CD4-positive, alpha-beta memory T cell (primary cell): ENCODE measurements at regions of chr15 and their contacts with region 1.

Region 1: GRCh38 chr15:84633311-84634227 is 20.5 kb downstream of the WDR73 start:
- DNase-seq: peak; percentile 62 to 68 (median 67)
- H3K4me3 ChIP-seq: peak overlapping the region; percentile 63 to 91
- H3K4me3 Mint-ChIP-seq: peak overlapping the region; percentile 91 to 97 (median 95)
- H3K27ac ChIP-seq: peak overlapping the region; percentile 75
- H3K27ac Mint-ChIP-seq: peak overlapping the region; percentile 91 to 97 (median 96)
- H3K4me1 ChIP-seq: peaks cover 40% of the 10 kb centered on the region
- H3K4me1 Mint-ChIP-seq: peaks cover 28 to 56% (median 44%) of the 10 kb centered on the region in 4 donors
- H3K27me3 ChIP-seq: no peaks in the 10 kb centered on the region
- H3K27me3 Mint-ChIP-seq: no peaks in the 10 kb centered on the region

Region 2: GRCh38 chr15:84588053-84588874 is 45.3 kb before region 1 on chr15:
- CTCF ChIA-PET with region 1: interaction called, 18 read pairs
- POLR2A ChIA-PET with region 1: interaction called, 6 read pairs
- intact Hi-C with region 1: loop called (anchors 1 kb)
- DNase-seq: peak; percentile 80 to 81 (median 80)
- H3K4me3 ChIP-seq: no peak overlapping the region
- H3K4me3 Mint-ChIP-seq: peak overlapping the region in 7 of 8 donors; percentile 19 to 77 (median 38)
- H3K27ac ChIP-seq: no peak overlapping the region
- H3K27ac Mint-ChIP-seq: peak overlapping the region in 4 of 7 donors; percentile 3 to 50 (median 31)
- H3K4me1 ChIP-seq: peaks cover 4% of the 10 kb centered on the region
- H3K4me1 Mint-ChIP-seq: peaks cover 0 to 5% (median 2%) of the 10 kb centered on the region in 4 donors
- H3K27me3 ChIP-seq: no peaks in the 10 kb centered on the region
- H3K27me3 Mint-ChIP-seq: peaks cover 0 to 5% of the 10 kb centered on the region in 2 donors

Region 3: DNA sequence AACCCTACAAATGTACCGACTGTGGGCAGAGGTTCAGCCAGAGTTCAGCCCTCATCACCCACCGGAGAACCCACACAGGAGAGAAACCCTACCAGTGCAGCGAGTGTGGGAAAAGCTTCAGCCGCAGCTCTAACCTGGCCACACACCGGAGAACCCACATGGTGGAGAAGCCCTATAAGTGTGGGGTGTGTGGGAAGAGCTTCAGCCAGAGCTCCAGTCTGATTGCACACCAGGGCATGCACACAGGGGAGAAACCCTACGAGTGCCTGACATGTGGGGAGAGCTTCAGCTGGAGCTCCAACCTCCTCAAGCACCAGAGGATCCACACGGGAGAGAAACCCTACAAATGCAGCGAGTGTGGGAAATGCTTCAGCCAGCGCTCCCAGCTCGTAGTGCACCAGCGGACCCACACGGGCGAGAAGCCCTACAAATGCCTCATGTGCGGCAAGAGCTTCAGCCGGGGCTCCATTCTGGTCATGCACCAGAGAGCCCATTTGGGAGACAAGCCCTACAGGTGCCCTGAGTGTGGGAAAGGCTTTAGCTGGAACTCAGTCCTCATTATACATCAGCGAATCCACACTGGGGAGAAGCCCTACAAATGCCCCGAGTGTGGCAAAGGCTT is 12.1 kb before region 1 on chr15:
- CTCF ChIA-PET with region 1: interaction called, 4 read pairs
- POLR2A ChIA-PET with region 1: interaction called, 11 read pairs
- intact Hi-C with region 1: no loop called
- DNase-seq: no peak
- H3K4me3 ChIP-seq: no peak overlapping the region
- H3K4me3 Mint-ChIP-seq: no peak overlapping the region
- H3K27ac ChIP-seq: no peak overlapping the region
- H3K27ac Mint-ChIP-seq: no peak overlapping the region
- H3K4me1 ChIP-seq: no peaks in the 10 kb centered on the region
- H3K4me1 Mint-ChIP-seq: peaks cover 0 to 5% (median 1%) of the 10 kb centered on the region in 4 donors
- H3K27me3 ChIP-seq: no peaks in the 10 kb centered on the region
- H3K27me3 Mint-ChIP-seq: no peaks in the 10 kb centered on the region

Region 4: DNA sequence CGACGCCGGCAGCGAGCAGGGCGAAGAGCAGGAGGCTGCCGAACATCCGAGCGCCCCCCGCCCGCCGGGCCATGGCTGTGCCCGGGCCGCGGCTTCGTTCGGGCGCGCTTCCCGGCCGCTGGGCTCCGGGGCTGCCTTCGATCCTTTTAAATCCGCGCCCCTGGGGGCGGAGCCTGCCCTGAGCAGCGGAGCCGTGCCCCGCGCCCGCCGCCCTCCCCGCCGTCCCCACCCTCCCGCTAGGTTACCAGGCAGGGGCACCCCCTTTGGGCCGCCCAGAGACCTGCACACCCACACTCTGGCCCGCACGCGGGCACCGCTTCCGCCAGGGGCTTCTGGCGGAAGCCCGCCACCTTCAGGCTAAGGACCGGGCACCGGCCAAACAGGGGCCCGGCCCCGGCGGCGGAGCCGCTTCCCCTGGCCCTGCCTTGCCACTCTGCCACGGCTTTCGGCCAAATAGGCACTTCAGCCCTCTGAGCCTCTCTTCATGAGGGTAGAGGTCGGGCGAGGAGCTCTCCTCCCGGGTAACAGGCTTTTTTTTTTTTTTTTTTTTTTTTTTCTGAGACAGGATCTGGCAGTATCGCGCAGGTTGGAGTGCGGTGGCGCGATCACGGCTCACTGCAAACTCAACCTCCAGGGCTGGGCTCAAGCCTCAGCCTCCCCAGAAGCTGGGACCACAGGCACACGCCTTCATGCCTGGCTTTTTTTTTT is 24.7 kb after region 1 on chr15 and contains the start of gene NMB:
- CTCF ChIA-PET with region 1: interaction called, 12 read pairs
- POLR2A ChIA-PET with region 1: interaction called, 101 read pairs
- intact Hi-C with region 1: loop called (anchors 1 kb)
- DNase-seq: peak; percentile 87 to 90 (median 88)
- H3K4me3 ChIP-seq: peak within 1 kb of the TSS; percentile 39 to 44
- H3K4me3 Mint-ChIP-seq: peak within 1 kb of the TSS; percentile 77 to 87 (median 81)
- H3K27ac ChIP-seq: peak within 1 kb of the TSS; percentile 58
- H3K27ac Mint-ChIP-seq: peak within 1 kb of the TSS; percentile 89 to 98 (median 93)
- H3K4me1 ChIP-seq: peaks cover 34% of the 10 kb centered on the region
- H3K4me1 Mint-ChIP-seq: peaks cover 14 to 52% (median 35%) of the 10 kb centered on the region in 4 donors
- H3K27me3 ChIP-seq: no peaks in the 10 kb centered on the region
- H3K27me3 Mint-ChIP-seq: no peaks in the 10 kb centered on the region
- total RNA-seq, gene NMB: 2.4 to 2.5 TPM

Region 5: DNA sequence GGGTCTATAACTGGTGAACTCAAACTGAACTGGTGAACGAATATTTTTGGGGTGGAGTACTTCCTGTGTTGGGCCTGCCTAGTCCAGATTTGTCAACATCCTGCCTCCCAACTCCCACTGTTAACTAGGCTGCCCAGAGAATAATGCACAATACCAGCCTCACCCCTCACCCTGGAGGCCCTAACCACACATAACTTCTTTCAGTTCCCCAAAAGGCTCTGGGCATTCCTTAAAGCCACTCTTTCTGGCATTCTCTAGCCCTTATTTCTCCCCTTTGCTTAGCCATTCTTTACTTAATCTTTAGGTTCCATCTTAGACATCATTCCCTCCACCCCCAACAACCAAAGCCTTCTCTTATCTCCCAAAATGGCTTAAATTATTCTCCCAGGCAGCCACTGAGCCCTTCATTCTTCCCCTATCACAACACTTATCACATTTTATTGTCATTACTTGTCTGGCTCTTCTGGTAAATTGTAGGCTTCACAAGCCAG is 91.5 kb after region 1 on chr15:
- CTCF ChIA-PET with region 1: interaction called, 3 read pairs
- POLR2A ChIA-PET with region 1: interaction called, 12 read pairs
- intact Hi-C with region 1: no loop called
- DNase-seq: peak; percentile 42 to 60 (median 53)
- H3K4me3 ChIP-seq: peak overlapping the region in 1 of 2 donors; percentile 35
- H3K4me3 Mint-ChIP-seq: peak overlapping the region; percentile 43 to 86 (median 80)
- H3K27ac ChIP-seq: peak overlapping the region; percentile 5
- H3K27ac Mint-ChIP-seq: peak overlapping the region; percentile 82 to 96 (median 91)
- H3K4me1 ChIP-seq: peaks cover 59% of the 10 kb centered on the region
- H3K4me1 Mint-ChIP-seq: peaks cover 33 to 69% (median 49%) of the 10 kb centered on the region in 4 donors
- H3K27me3 ChIP-seq: no peaks in the 10 kb centered on the region
- H3K27me3 Mint-ChIP-seq: no peaks in the 10 kb centered on the region

Region 6: GRCh38 chr15:84748274-84749110 is 114.9 kb after region 1 on chr15 and contains the start of gene ZNF592:
- CTCF ChIA-PET with region 1: interaction called, 3 read pairs
- POLR2A ChIA-PET with region 1: interaction called, 12 read pairs
- intact Hi-C with region 1: loop called (anchors 1 kb)
- DNase-seq: peak; percentile 78 to 87 (median 80)
- H3K4me3 ChIP-seq: peak within 1 kb of the TSS; percentile 88 to 93
- H3K4me3 Mint-ChIP-seq: peak within 1 kb of the TSS; percentile 93 to 99 (median 98)
- H3K27ac ChIP-seq: peak within 1 kb of the TSS; percentile 80
- H3K27ac Mint-ChIP-seq: peak within 1 kb of the TSS; percentile 97 to 99 (median 99)
- H3K4me1 ChIP-seq: peaks cover 68% of the 10 kb centered on the region
- H3K4me1 Mint-ChIP-seq: peaks cover 52 to 74% (median 64%) of the 10 kb centered on the region in 4 donors
- H3K27me3 ChIP-seq: no peaks in the 10 kb centered on the region
- H3K27me3 Mint-ChIP-seq: no peaks in the 10 kb centered on the region
- total RNA-seq, gene ZNF592: 40.8 to 42.6 TPM